B cell (primary cell): ENCODE measurements at regions of chr12 and their contacts with region 1.

Region 1: GRCh38 chr12:15522565-15523187 is 200.4 kb downstream of the PTPRO start:
- DNase-seq: peak; percentile 42
- ATAC-seq: no peak
- H3K4me3 ChIP-seq: no peak overlapping the region
- H3K4me3 Mint-ChIP-seq: no peak overlapping the region
- H3K27ac ChIP-seq: no peak overlapping the region
- H3K27ac Mint-ChIP-seq: no peak overlapping the region
- H3K4me1 ChIP-seq: peaks cover 0 to 5% of the 10 kb centered on the region in 2 donors
- H3K4me1 Mint-ChIP-seq: peaks cover 6% of the 10 kb centered on the region
- H3K27me3 ChIP-seq: no peaks in the 10 kb centered on the region
- H3K27me3 Mint-ChIP-seq: peaks cover 24% of the 10 kb centered on the region
- CTCF ChIP-seq: peak; percentile 66

Region 2: DNA sequence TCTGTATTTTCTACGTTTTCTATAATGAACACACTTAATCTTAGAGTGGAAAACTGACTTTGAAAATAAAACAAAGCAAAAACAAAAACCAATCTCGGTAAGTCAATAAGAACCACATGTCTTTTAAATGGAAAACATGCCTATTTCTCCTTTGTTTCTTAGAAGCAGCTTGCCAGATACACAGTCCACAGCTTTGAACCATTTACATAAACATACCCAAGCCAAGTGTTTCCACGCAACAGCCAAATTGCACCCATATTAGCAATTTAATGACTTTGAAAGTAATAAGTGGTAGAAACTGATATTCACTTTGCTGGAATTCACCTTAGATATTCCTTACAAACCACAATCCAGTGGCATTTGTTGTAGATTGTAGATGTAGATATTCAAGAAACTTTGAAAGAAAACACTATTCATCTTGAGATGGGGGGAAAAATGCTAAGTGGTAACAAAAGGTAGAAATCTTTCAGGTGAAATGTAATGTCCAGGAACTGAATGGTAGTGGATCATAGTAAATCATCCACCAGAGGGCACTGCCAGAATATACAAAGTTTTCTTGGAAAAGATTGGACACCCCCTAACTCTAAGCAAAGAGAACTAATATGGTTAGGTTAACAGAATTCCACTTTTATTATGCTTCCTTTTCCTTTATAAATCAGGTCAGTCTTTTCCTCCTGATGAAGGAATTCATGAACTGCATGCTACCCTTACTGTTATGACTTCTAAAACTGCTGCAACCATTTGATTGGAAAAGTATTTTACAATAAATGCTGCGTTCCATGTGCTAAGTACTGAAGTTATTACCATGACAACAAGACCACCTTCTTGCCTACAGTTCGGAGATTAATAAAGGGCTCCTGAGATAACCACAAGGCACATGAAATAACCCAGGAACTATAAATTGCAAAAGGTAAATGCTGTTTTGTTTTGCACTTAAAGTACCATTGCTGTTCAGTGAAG is 371.2 kb before region 1 on chr12:
- CTCF ChIA-PET with region 1: no interaction called
- POLR2A ChIA-PET with region 1: no interaction called
- intact Hi-C with region 1: loop called (anchors 2 kb)
- DNase-seq: peak; percentile 3
- ATAC-seq: no peak
- H3K4me3 ChIP-seq: no peak overlapping the region
- H3K4me3 Mint-ChIP-seq: no peak overlapping the region
- H3K27ac ChIP-seq: no peak overlapping the region
- H3K27ac Mint-ChIP-seq: no peak overlapping the region
- H3K4me1 ChIP-seq: no peaks in the 10 kb centered on the region
- H3K4me1 Mint-ChIP-seq: no peaks in the 10 kb centered on the region
- H3K27me3 ChIP-seq: peaks cover 0 to 10% (median 0%) of the 10 kb centered on the region in 4 experiments
- H3K27me3 Mint-ChIP-seq: peaks cover 18% of the 10 kb centered on the region
- CTCF ChIP-seq: peak; percentile 25

Region 3: GRCh38 chr12:15276088-15276698 is 246.5 kb before region 1 on chr12:
- CTCF ChIA-PET with region 1: interaction called, 19 read pairs
- POLR2A ChIA-PET with region 1: no interaction called
- intact Hi-C with region 1: loop called (anchors 1 kb)
- DNase-seq: peak; percentile 20
- ATAC-seq: no peak
- H3K4me3 ChIP-seq: no peak overlapping the region
- H3K4me3 Mint-ChIP-seq: no peak overlapping the region
- H3K27ac ChIP-seq: no peak overlapping the region
- H3K27ac Mint-ChIP-seq: no peak overlapping the region
- H3K4me1 ChIP-seq: no peaks in the 10 kb centered on the region
- H3K4me1 Mint-ChIP-seq: peaks cover 4% of the 10 kb centered on the region
- H3K27me3 ChIP-seq: peaks cover 0 to 4% (median 0%) of the 10 kb centered on the region in 4 experiments
- H3K27me3 Mint-ChIP-seq: peaks cover 15% of the 10 kb centered on the region
- CTCF ChIP-seq: peak; percentile 75

Region 4: GRCh38 chr12:15590180-15590826 is 67.6 kb after region 1 on chr12:
- CTCF ChIA-PET with region 1: interaction called, 702 read pairs
- POLR2A ChIA-PET with region 1: no interaction called
- intact Hi-C with region 1: no loop called
- DNase-seq: peak; percentile 79
- ATAC-seq: peak; percentile 91
- H3K4me3 ChIP-seq: peak overlapping the region in 1 of 5 experiments; percentile 20
- H3K4me3 Mint-ChIP-seq: peak overlapping the region; percentile 81
- H3K27ac ChIP-seq: no peak overlapping the region
- H3K27ac Mint-ChIP-seq: peak overlapping the region; percentile 64
- H3K4me1 ChIP-seq: peaks cover 6 to 8% of the 10 kb centered on the region in 2 donors
- H3K4me1 Mint-ChIP-seq: peaks cover 9% of the 10 kb centered on the region
- H3K27me3 ChIP-seq: no peaks in the 10 kb centered on the region
- H3K27me3 Mint-ChIP-seq: no peaks in the 10 kb centered on the region
- CTCF ChIP-seq: peak; percentile 91